Ovary (tissue), 10 donors: ENCODE measurements at regions of chr19 and their contacts with region 1.

Region 1: GRCh38 chr19:56155124-56155687 is 14.1 kb downstream of the ZNF444 start:
- DNase-seq: no peak
- H3K4me3 ChIP-seq: no peak overlapping the region
- H3K27ac ChIP-seq: no peak overlapping the region
- H3K4me1 ChIP-seq: no peaks in the 10 kb centered on the region
- H3K27me3 ChIP-seq: no peaks in the 10 kb centered on the region
- CTCF ChIP-seq: no peak
- EP300 ChIP-seq: no peak
- POLR2A ChIP-seq: no peak

Region 2: GRCh38 chr19:54517483-54517882 is 1637.7 kb before region 1 on chr19:
- intact Hi-C with region 1: no loop called
- DNase-seq: peak in 2 of 5 donors; percentile 18 to 37
- H3K4me3 ChIP-seq: no peak overlapping the region
- H3K27ac ChIP-seq: no peak overlapping the region
- H3K4me1 ChIP-seq: no peaks in the 10 kb centered on the region
- H3K27me3 ChIP-seq: no peaks in the 10 kb centered on the region
- CTCF ChIP-seq: no peak
- EP300 ChIP-seq: no peak
- POLR2A ChIP-seq: no peak

Region 3: DNA sequence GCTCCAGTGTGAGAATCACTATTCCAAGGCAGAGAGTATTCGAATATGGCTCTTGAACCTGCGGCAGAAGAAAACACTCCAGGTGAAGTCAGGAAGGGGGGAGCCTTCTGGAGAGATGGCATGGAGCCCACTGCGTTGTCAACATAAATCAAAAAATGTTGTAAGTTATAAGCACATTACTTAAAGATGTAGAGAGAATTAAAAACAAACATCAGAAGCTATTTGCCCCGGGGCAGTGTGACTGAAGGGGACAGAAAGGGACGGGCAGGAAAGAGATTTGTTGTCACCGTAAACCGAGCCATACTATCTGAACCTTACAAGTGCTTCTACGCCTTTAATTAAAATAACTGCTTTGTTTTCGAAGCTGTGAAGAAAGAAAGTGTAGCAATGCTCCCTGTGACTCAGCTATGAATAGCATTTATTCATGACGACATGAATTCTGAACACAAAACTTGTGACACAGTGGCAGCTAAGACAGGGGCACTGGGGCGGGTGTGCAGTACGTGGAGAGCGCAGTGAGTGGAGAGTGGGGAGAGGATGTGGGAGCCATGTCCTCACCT is 64.2 kb before region 1 on chr19:
- intact Hi-C with region 1: no loop called
- DNase-seq: no peak
- H3K4me3 ChIP-seq: no peak overlapping the region
- H3K27ac ChIP-seq: no peak overlapping the region
- H3K4me1 ChIP-seq: no peaks in the 10 kb centered on the region
- H3K27me3 ChIP-seq: no peaks in the 10 kb centered on the region
- CTCF ChIP-seq: no peak
- EP300 ChIP-seq: no peak
- POLR2A ChIP-seq: no peak

Region 4: DNA sequence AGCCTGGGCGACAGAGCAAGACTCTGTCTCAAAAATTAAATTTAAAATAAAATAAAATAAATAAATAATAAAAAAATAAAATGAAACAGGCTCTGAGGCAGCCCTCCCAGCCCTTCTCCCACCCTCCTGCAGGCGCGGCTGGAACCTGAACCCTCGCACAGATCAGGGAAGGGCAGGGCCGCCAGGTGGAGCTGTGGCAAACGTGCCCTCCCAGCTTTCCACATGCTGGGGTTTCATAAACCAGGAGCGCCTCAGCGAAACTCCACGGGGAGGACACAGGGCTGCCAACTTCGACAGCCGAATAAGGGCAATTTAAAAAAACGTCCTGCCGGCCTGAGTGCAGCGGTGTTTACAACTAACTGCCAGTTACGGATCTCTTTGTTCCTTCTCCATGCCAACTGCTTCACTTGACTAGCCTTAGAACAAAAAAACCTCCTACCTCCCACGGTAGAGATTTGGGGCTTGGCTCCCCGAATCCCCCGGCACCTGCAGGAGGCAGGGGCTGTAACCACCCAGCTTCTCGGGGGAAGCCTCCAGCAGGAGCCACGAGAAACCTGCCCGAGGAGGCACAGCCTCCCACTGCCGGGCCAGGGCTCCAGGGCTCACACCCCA is 50.0 kb before region 1 on chr19:
- intact Hi-C with region 1: loop called in 2 of 4 experiments (anchors 5 kb)
- DNase-seq: peak; percentile 67 to 82 (median 73)
- H3K4me3 ChIP-seq: no peak overlapping the region
- H3K27ac ChIP-seq: peak overlapping the region in 1 of 2 donors; percentile 23
- H3K4me1 ChIP-seq: peaks cover 23% of the 10 kb centered on the region
- H3K27me3 ChIP-seq: no peaks in the 10 kb centered on the region
- CTCF ChIP-seq: peak; percentile 18 to 47 (median 36)
- EP300 ChIP-seq: no peak
- POLR2A ChIP-seq: no peak

Region 5: GRCh38 chr19:56111601-56112312 is 43.4 kb before region 1 on chr19:
- intact Hi-C with region 1: loop called in 2 of 4 experiments (anchors 5 kb)
- DNase-seq: no peak
- H3K4me3 ChIP-seq: no peak overlapping the region
- H3K27ac ChIP-seq: peak overlapping the region in 1 of 2 donors; percentile 20
- H3K4me1 ChIP-seq: peaks cover 37% of the 10 kb centered on the region
- H3K27me3 ChIP-seq: no peaks in the 10 kb centered on the region
- CTCF ChIP-seq: no peak
- EP300 ChIP-seq: no peak
- POLR2A ChIP-seq: no peak